ENCODE measurements at regions of chr19 and their contacts with region 1.

Region 1: GRCh38 chr19:14059093-14059480 is 2.8 kb downstream of the PALM3 start:
- DNase-seq: no peak
- H3K4me3 ChIP-seq: no peak overlapping the region
- H3K27ac ChIP-seq: no peak overlapping the region
- H3K4me1 ChIP-seq: no peaks in the 10 kb centered on the region
- H3K27me3 ChIP-seq: peaks cover 7 to 8% of the 10 kb centered on the region in 2 experiments
- CTCF ChIP-seq: peak; percentile 67 to 87
- POLR2A ChIP-seq: no peak

Region 2: GRCh38 chr19:13880059-13881043 is 178.7 kb before region 1 on chr19:
- CTCF ChIA-PET with region 1: interaction called, 24 read pairs
- POLR2A ChIA-PET with region 1: no interaction called
- dilution Hi-C with region 1: no loop called
- intact Hi-C with region 1: loop called (anchors 5 kb)
- DNase-seq: peak; percentile 96
- H3K4me3 ChIP-seq: peak overlapping the region in 1 of 3 experiments; percentile 4
- H3K27ac ChIP-seq: peak overlapping the region; percentile 78
- H3K4me1 ChIP-seq: peaks cover 5% of the 10 kb centered on the region
- H3K27me3 ChIP-seq: no peaks in the 10 kb centered on the region
- CTCF ChIP-seq: peak; percentile 100
- POLR2A ChIP-seq: no peak

Region 3: DNA sequence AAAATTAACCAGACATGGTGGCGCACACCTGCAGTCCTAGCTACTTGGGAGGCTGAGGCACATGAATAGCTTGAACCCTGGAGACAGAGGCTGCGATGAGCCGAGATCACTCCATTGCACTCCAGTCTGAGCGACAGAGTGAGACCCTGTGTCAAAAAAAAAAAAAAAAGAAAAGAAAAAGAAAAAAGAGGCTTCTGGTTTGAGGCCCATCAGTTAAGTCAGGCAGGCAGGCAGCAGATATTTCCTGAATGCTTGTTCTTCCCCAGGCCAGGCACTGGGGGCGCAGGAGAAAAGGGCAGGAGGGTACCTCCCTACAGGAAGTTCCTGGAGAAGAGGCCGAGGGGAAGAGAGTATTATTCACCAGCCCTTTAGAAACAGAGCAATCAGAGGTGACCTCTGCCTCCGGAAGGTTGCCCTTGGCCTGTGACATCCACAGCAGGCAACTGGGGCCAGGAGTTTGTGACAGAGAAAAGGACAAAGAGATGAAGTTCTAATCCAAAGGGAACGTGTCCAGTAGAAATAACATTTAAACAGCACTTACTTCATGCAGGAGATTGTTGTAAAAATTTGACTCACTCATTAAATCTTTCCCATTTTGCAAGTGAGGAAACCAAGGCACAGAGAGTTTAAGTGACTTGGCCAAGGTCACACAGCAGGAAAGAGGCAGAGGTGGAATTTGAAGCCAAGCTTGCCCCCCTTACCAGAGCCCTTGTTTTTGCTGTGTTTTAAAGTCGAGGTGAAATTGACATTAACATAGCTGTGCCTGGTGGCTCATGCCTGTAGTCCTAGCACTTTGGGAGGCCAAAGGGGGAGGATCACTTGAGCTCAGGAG is 35.5 kb before region 1 on chr19:
- CTCF ChIA-PET with region 1: interaction called, 12 read pairs
- POLR2A ChIA-PET with region 1: no interaction called
- dilution Hi-C with region 1: no loop called
- intact Hi-C with region 1: no loop called
- DNase-seq: peak; percentile 83
- H3K4me3 ChIP-seq: no peak overlapping the region
- H3K27ac ChIP-seq: no peak overlapping the region
- H3K4me1 ChIP-seq: peaks cover 6% of the 10 kb centered on the region
- H3K27me3 ChIP-seq: peaks cover 0 to 5% of the 10 kb centered on the region in 2 experiments
- CTCF ChIP-seq: peak in 1 of 2 donors; percentile 48
- POLR2A ChIP-seq: no peak

Region 4: DNA sequence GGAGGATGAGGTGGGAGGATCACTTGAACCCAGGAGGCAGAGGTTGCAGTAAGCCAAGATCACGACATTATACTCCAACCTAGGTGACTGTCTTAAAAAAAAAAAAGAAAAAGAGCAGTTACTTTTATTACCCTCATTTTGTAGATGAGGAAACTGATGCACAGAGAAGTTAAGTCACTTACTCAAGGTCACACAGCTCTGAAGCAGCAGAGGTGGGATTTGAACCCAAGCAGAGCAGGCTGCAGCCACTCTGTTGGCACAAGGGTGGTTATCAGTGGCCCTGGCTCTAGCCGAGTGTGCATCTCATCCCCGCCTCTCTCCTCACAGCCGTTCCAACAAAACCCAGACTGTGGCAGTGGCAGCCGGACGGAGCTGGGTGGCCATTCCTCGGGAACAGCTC is 19.9 kb before region 1 on chr19:
- CTCF ChIA-PET with region 1: interaction called, 58 read pairs
- POLR2A ChIA-PET with region 1: no interaction called
- dilution Hi-C with region 1: no loop called
- intact Hi-C with region 1: no loop called
- DNase-seq: no peak
- H3K4me3 ChIP-seq: no peak overlapping the region
- H3K27ac ChIP-seq: no peak overlapping the region
- H3K4me1 ChIP-seq: no peaks in the 10 kb centered on the region
- H3K27me3 ChIP-seq: no peaks in the 10 kb centered on the region
- CTCF ChIP-seq: no peak
- POLR2A ChIP-seq: no peak

Region 5: DNA sequence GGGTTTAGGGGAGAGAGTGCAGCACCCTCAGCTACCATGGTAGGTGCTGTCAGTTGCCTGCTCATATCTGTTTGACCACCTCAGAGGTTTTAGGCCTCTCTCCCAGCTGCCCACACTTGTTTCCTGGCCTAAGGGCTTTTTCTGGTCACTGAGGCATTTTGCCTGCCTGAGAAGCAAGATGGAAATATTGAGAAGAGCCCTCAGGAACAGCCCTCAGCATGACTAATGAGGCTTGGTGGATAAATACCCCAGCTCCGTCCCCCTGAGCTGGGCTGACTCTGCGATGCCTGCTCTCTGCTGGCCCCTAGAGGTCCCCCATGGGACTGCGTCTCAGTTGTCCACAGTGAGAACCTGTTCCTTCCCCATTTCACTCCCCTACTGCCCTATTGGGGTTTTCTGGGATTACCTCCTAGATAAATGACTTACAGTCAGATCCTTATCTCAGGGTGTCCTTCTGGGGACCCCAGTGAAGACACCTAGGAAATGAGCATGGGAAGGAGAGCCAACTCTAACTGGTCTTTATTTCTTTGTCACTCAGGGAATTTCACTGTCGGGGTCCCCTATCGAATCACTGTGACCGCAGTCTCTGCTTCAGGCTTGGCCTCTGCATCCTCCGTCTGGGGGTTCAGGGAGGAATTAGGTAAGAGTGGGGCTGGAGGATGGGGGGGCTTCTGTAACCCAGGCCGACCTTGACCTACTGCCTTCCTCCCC is 10.5 kb before region 1 on chr19:
- CTCF ChIA-PET with region 1: interaction called, 58 read pairs
- POLR2A ChIA-PET with region 1: no interaction called
- dilution Hi-C with region 1: no loop called
- intact Hi-C with region 1: no loop called
- DNase-seq: peak; percentile 35
- H3K4me3 ChIP-seq: no peak overlapping the region
- H3K27ac ChIP-seq: no peak overlapping the region
- H3K4me1 ChIP-seq: no peaks in the 10 kb centered on the region
- H3K27me3 ChIP-seq: no peaks in the 10 kb centered on the region
- CTCF ChIP-seq: peak; percentile 83 to 91
- POLR2A ChIP-seq: no peak

Region 6: GRCh38 chr19:14073261-14073924 is 14.3 kb after region 1 on chr19:
- CTCF ChIA-PET with region 1: interaction called, 51 read pairs
- POLR2A ChIA-PET with region 1: no interaction called
- dilution Hi-C with region 1: no loop called
- intact Hi-C with region 1: no loop called
- DNase-seq: peak; percentile 59
- H3K4me3 ChIP-seq: peak overlapping the region; percentile 29 to 61 (median 43)
- H3K27ac ChIP-seq: no peak overlapping the region
- H3K4me1 ChIP-seq: peaks cover 26% of the 10 kb centered on the region
- H3K27me3 ChIP-seq: no peaks in the 10 kb centered on the region
- CTCF ChIP-seq: peak; percentile 35 to 60
- POLR2A ChIP-seq: no peak

Region 7: GRCh38 chr19:14237014-14237941 is 178.2 kb after region 1 on chr19:
- CTCF ChIA-PET with region 1: no interaction called
- POLR2A ChIA-PET with region 1: no interaction called
- dilution Hi-C with region 1: no loop called
- intact Hi-C with region 1: no loop called
- DNase-seq: no peak
- H3K4me3 ChIP-seq: no peak overlapping the region
- H3K27ac ChIP-seq: no peak overlapping the region
- H3K4me1 ChIP-seq: no peaks in the 10 kb centered on the region
- H3K27me3 ChIP-seq: no peaks in the 10 kb centered on the region
- CTCF ChIP-seq: no peak
- POLR2A ChIP-seq: no peak

Measured in endothelial cell of umbilical vein (primary cell).